GM12878 (cell line): ENCODE measurements at regions of chr6 and their contacts with region 1.

Region 1: DNA sequence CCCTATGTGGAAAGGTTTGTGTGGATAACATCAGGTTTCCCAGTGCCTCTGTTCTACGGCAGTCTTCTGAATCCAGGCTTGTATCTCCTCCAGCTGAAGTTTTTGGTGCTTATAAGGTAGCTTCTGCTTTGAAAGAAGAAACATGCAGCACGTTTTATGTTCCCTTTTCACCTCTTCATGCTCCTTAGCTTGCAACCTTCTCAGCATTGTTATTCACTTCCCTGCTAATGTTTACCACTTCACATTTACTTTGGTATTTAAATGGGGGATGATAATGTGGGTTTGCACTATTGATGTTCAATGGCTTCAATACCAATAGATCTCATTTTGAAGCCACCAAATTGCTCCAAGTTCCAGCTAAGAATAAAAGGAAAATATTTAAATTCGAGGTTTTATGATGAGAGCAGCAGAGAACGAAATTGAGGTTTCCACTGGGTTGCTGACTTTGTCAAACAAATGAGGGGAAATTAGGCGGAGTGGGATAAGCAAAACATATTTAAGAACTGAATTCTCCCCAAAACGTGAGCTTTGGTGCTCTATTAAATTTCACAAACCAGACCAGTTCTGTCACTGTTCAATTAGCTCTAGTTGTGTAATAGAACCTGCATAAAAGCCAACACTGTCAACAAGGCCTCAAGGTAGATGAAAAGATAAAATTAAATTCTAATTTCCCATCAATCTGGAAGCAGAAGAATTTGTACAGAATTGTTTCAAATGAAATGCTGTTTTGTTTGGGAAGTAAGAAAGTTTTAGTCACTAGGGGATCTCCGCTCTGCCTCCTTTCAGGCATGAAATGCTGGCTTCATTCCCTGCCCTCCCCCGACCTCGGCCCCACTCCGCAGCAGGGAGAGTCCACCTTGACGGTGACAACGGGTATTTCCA is 1.4 kb downstream of the IL22RA2 start:
- DNase-seq: peak; percentile 68
- ATAC-seq: peak; percentile 86
- H3K4me3 ChIP-seq: 0 out of 2 replicates have a peak overlapping the region, but pooled peaks have one; percentile 1
- H3K27ac ChIP-seq: peak overlapping the region; percentile 84
- H3K4me1 ChIP-seq: peaks cover 51% of the 10 kb centered on the region
- H3K27me3 ChIP-seq: no peaks in the 10 kb centered on the region
- CTCF ChIP-seq: no peak
- EP300 ChIP-seq: peak; percentile 51 to 64; a peak in 1 of 4 replicates
- POLR2A ChIP-seq: 0 out of 2 replicates have a peak, but pooled peaks have one; percentile 31
- RAD21 ChIP-seq: peak; percentile 18; the same call in 1 of the 2 replicates

Region 2: GRCh38 chr6:137122610-137123009 is 49.5 kb before region 1 on chr6:
- CTCF ChIA-PET with region 1: interaction called, 20 read pairs
- POLR2A ChIA-PET with region 1: interaction called, 3 read pairs
- RAD21 ChIA-PET with region 1: interaction called, 44 read pairs
- SMC1A ChIA-PET with region 1: interaction called, 45 read pairs
- in situ Hi-C with region 1: no loop called
- intact Hi-C with region 1: no loop called
- DNase-seq: no peak
- ATAC-seq: peak; percentile 74
- H3K4me3 ChIP-seq: no peak overlapping the region
- H3K27ac ChIP-seq: peak overlapping the region; percentile 91
- H3K4me1 ChIP-seq: peaks cover 35% of the 10 kb centered on the region
- H3K27me3 ChIP-seq: no peaks in the 10 kb centered on the region
- CTCF ChIP-seq: no peak
- EP300 ChIP-seq: no peak
- POLR2A ChIP-seq: no peak
- RAD21 ChIP-seq: peak; percentile 12; the same call in 1 of the 2 replicates

Region 3: DNA sequence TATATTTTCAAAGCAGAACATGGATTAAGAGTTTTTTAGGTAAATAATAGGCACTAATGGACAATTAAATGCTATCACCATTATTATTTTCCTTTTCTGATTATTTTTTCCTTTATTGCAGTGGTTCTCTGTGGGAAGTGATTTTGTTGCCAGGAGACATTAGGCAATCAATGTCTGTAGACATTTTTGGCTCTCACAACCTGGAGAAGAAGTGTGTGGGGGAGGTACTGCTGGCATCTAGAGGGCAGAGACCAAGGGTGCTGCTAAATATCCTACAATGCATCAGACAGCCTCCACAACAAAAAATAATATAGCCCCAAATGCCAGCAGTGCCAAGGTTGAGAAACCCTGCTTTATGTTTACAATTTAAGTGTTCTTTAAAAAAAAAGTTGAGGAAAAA is 38.8 kb after region 1 on chr6:
- CTCF ChIA-PET with region 1: interaction called, 11 read pairs
- POLR2A ChIA-PET with region 1: interaction called, 18 read pairs
- RAD21 ChIA-PET with region 1: interaction called, 68 read pairs
- SMC1A ChIA-PET with region 1: interaction called, 70 read pairs
- in situ Hi-C with region 1: no loop called
- intact Hi-C with region 1: no loop called
- DNase-seq: no peak
- ATAC-seq: no peak
- H3K4me3 ChIP-seq: no peak overlapping the region
- H3K27ac ChIP-seq: no peak overlapping the region
- H3K4me1 ChIP-seq: peaks cover 9% of the 10 kb centered on the region; the same call in 1 of the 2 replicates
- H3K27me3 ChIP-seq: no peaks in the 10 kb centered on the region
- CTCF ChIP-seq: no peak
- EP300 ChIP-seq: no peak
- POLR2A ChIP-seq: no peak
- RAD21 ChIP-seq: no peak

Region 4: DNA sequence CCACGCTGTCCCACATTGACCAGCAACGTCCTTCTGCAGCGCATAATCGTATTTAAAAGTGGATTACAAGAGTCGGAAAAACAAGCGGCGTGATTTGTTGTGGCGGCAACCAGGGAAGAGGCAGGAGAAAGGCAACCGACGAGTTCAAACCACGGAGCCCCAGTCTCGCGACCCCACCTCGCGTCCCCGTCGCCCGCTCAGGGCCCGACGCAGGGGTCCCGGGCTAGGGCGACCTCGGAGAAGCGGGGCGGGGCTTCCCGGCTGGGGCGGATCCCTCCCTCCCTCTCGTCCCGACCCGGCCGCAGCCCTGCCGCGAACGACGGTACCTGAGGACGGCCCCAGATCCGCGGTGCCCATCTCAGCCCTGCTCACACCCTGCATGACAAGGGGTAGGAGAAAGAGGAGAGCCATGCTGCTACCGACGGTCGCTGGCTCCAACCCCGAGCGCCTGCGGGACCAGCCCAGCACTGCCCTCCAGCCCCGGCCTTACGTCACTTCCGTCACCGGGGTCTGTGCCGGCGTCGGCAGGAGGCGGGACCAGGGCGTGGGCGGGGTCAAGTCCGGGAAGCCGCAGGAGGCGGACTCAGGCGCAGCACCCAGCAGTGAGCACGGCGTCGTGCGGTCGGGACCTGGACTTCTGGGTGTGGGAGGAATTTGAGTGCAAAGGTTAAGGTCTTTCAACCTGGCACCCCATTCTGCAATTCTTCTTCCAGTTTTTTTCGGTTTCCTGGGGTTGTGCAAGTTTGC is 47.0 kb after region 1 on chr6 and contains the start of gene IFNGR1:
- CTCF ChIA-PET with region 1: interaction called, 3 read pairs
- POLR2A ChIA-PET with region 1: interaction called, 18 read pairs
- RAD21 ChIA-PET with region 1: interaction called, 68 read pairs
- SMC1A ChIA-PET with region 1: interaction called, 70 read pairs
- in situ Hi-C with region 1: no loop called
- intact Hi-C with region 1: loop called (anchors 2 kb)
- DNase-seq: peak; percentile 81
- ATAC-seq: peak; percentile 79
- H3K4me3 ChIP-seq: peak within 1 kb of the TSS; percentile 91
- H3K27ac ChIP-seq: peak within 1 kb of the TSS; percentile 94
- H3K4me1 ChIP-seq: peaks cover 15% of the 10 kb centered on the region
- H3K27me3 ChIP-seq: no peaks in the 10 kb centered on the region
- CTCF ChIP-seq: no peak
- EP300 ChIP-seq: no peak
- POLR2A ChIP-seq: peak; percentile 94
- RAD21 ChIP-seq: no peak
- polyA plus RNA-seq, gene IFNGR1: 182 to 296 TPM

Region 5: DNA sequence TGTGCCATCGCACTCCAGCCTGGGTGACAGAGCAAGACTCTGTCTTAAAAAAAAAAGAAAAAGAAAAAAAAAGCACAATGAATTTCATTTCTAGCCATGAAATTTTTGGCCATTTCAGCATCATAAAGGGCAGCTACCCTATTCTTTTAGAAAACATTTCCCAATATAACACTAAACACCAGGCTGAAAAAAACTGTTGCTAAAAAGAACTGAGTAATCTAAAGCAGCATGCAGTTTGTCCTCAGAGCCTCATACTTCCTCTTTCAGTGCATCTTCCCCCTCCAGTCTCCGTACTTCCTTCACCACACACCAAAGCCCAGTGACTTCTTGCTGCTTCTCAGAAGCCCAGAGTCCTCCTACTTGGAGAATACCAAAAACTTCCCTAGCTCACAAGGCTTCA is 52.7 kb after region 1 on chr6:
- CTCF ChIA-PET with region 1: interaction called, 4 read pairs
- POLR2A ChIA-PET with region 1: interaction called, 6 read pairs
- RAD21 ChIA-PET with region 1: interaction called, 44 read pairs
- SMC1A ChIA-PET with region 1: interaction called, 14 read pairs
- in situ Hi-C with region 1: no loop called
- intact Hi-C with region 1: loop called (anchors 2 kb)
- DNase-seq: peak; percentile 70
- ATAC-seq: peak; percentile 76
- H3K4me3 ChIP-seq: no peak overlapping the region
- H3K27ac ChIP-seq: peak overlapping the region; percentile 84
- H3K4me1 ChIP-seq: peaks cover 67% of the 10 kb centered on the region
- H3K27me3 ChIP-seq: no peaks in the 10 kb centered on the region
- CTCF ChIP-seq: no peak
- EP300 ChIP-seq: 0 out of 4 replicates have a peak, but pooled peaks of 1 of the 2 experiments have one; percentile 48
- POLR2A ChIP-seq: no peak
- RAD21 ChIP-seq: no peak

Region 6: GRCh38 chr6:137233911-137234863 is 62.1 kb after region 1 on chr6:
- CTCF ChIA-PET with region 1: interaction called, 10 read pairs
- POLR2A ChIA-PET with region 1: interaction called, 6 read pairs
- RAD21 ChIA-PET with region 1: interaction called, 44 read pairs
- SMC1A ChIA-PET with region 1: interaction called, 36 read pairs
- in situ Hi-C with region 1: no loop called
- intact Hi-C with region 1: no loop called
- DNase-seq: no peak
- ATAC-seq: peak; percentile 79
- H3K4me3 ChIP-seq: peak overlapping the region; percentile 28; the same call in 1 of the 2 replicates
- H3K27ac ChIP-seq: peak overlapping the region; percentile 76
- H3K4me1 ChIP-seq: peaks cover 52% of the 10 kb centered on the region
- H3K27me3 ChIP-seq: no peaks in the 10 kb centered on the region
- CTCF ChIP-seq: no peak
- EP300 ChIP-seq: peak in 1 of 2 experiments; percentile 60; a peak in 1 of 4 replicates
- POLR2A ChIP-seq: no peak
- RAD21 ChIP-seq: no peak

Region 7: GRCh38 chr6:137248702-137249101 is 76.6 kb after region 1 on chr6:
- CTCF ChIA-PET with region 1: interaction called, 10 read pairs
- POLR2A ChIA-PET with region 1: interaction called, 7 read pairs
- RAD21 ChIA-PET with region 1: interaction called, 7 read pairs
- SMC1A ChIA-PET with region 1: interaction called, 16 read pairs
- in situ Hi-C with region 1: no loop called
- intact Hi-C with region 1: no loop called
- DNase-seq: no peak
- ATAC-seq: peak; percentile 84
- H3K4me3 ChIP-seq: no peak overlapping the region
- H3K27ac ChIP-seq: peak overlapping the region; percentile 37; the same call in 1 of the 2 replicates
- H3K4me1 ChIP-seq: peaks cover 11% of the 10 kb centered on the region
- H3K27me3 ChIP-seq: no peaks in the 10 kb centered on the region
- CTCF ChIP-seq: no peak
- EP300 ChIP-seq: no peak
- POLR2A ChIP-seq: no peak
- RAD21 ChIP-seq: no peak